Activated CD8-positive, alpha-beta T cell treated with anti-CD3 and anti-CD28 coated beads for 36 hours (primary cell): ENCODE measurements at regions of chr17 and their contacts with region 1.

Region 1: GRCh38 chr17:32127158-32127897 is 15.0 kb upstream of the RHOT1 start:
- DNase-seq: peak; percentile 87
- ATAC-seq: peak; percentile 99
- H3K4me3 Mint-ChIP-seq: peak overlapping the region; percentile 89
- H3K27ac Mint-ChIP-seq: peak overlapping the region; percentile 94
- H3K4me1 Mint-ChIP-seq: peaks cover 8% of the 10 kb centered on the region
- H3K27me3 Mint-ChIP-seq: no peaks in the 10 kb centered on the region
- CTCF ChIP-seq: no peak

Region 2: GRCh38 chr17:32033223-32033622 is 94.1 kb before region 1 on chr17:
- CTCF ChIA-PET with region 1: no interaction called
- POLR2A ChIA-PET with region 1: no interaction called
- intact Hi-C with region 1: no loop called
- DNase-seq: no peak
- ATAC-seq: no peak
- H3K4me3 Mint-ChIP-seq: no peak overlapping the region
- H3K27ac Mint-ChIP-seq: no peak overlapping the region
- H3K4me1 Mint-ChIP-seq: peaks cover 3% of the 10 kb centered on the region
- H3K27me3 Mint-ChIP-seq: no peaks in the 10 kb centered on the region
- CTCF ChIP-seq: no peak

Region 3: DNA sequence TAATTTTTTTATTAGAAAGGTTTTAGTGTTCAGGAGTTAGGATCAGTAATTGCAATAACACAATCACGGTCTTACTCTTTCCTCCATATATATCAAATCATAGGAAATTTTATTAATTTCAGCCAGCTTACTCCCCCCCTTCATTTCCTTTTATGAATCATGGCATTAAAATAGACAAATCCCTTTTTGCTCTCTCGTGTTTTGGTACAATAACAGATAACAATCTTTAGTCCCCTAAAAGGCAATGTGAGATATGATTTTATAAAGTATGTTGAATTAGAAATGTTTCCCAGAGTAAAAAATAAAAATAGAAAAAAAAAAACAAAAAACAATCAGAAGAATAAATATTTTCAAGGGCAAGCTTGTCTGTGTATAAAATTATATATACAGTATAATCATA is 27.6 kb before region 1 on chr17:
- CTCF ChIA-PET with region 1: no interaction called
- POLR2A ChIA-PET with region 1: no interaction called
- intact Hi-C with region 1: no loop called
- DNase-seq: no peak
- ATAC-seq: no peak
- H3K4me3 Mint-ChIP-seq: no peak overlapping the region
- H3K27ac Mint-ChIP-seq: no peak overlapping the region
- H3K4me1 Mint-ChIP-seq: peaks cover 16% of the 10 kb centered on the region
- H3K27me3 Mint-ChIP-seq: no peaks in the 10 kb centered on the region
- CTCF ChIP-seq: no peak

Region 4: DNA sequence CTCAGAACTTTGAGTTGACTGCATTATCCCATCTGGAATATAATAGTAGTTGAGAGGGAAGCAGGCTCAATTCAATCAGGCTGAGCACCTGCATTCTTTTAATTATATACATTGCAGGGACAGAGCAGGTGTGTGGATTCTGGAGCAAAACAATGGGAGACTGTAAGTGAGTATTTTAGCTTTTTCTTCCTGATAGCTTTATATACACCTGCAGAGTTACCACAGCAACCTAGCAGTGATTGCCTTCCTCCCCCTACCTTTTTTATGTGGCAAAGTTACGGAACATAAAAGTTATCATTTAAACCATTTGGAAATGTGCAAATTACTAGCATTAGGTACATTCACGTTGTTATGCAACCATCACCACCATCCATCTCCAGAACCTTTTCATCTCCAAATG is 10.4 kb before region 1 on chr17:
- CTCF ChIA-PET with region 1: no interaction called
- POLR2A ChIA-PET with region 1: no interaction called
- intact Hi-C with region 1: no loop called
- DNase-seq: no peak
- ATAC-seq: no peak
- H3K4me3 Mint-ChIP-seq: no peak overlapping the region
- H3K27ac Mint-ChIP-seq: no peak overlapping the region
- H3K4me1 Mint-ChIP-seq: peaks cover 15% of the 10 kb centered on the region
- H3K27me3 Mint-ChIP-seq: peaks cover 4% of the 10 kb centered on the region
- CTCF ChIP-seq: no peak

Region 5: GRCh38 chr17:32142038-32142856 is 14.9 kb after region 1 on chr17 and contains the start of gene RHOT1:
- CTCF ChIA-PET with region 1: interaction called, 54 read pairs
- POLR2A ChIA-PET with region 1: no interaction called
- intact Hi-C with region 1: no loop called
- DNase-seq: peak; percentile 71
- ATAC-seq: peak; percentile 84
- H3K4me3 Mint-ChIP-seq: peak within 1 kb of the TSS; percentile 90
- H3K27ac Mint-ChIP-seq: peak within 1 kb of the TSS; percentile 88
- H3K4me1 Mint-ChIP-seq: peaks cover 29% of the 10 kb centered on the region
- H3K27me3 Mint-ChIP-seq: no peaks in the 10 kb centered on the region
- CTCF ChIP-seq: peak; percentile 54
- total RNA-seq, gene RHOT1: 25.8 to 27.2 TPM

Region 6: DNA sequence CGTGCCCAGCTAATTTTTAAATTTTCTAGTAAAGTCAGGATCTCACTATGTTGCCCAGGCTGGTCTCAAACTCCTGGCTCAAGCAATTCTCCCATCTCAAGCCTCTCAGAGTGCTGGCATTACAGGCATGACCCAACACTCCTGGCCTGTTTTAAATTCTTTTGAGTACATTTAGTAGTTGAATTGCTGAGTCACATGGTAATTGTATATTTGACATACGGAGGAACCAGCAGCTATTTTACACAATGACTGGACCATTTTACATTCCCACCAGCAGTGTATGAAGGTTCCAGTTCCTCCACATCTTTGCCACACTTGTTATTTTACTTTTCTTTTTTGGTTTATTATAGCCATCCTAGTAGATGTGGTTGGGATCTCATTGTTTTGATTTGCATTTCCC is 58.5 kb after region 1 on chr17:
- CTCF ChIA-PET with region 1: no interaction called
- POLR2A ChIA-PET with region 1: no interaction called
- intact Hi-C with region 1: no loop called
- DNase-seq: no peak
- ATAC-seq: no peak
- H3K4me3 Mint-ChIP-seq: no peak overlapping the region
- H3K27ac Mint-ChIP-seq: no peak overlapping the region
- H3K4me1 Mint-ChIP-seq: no peaks in the 10 kb centered on the region
- H3K27me3 Mint-ChIP-seq: no peaks in the 10 kb centered on the region
- CTCF ChIP-seq: no peak